Testis (tissue), 5 donors: ENCODE measurements at regions of chr20 and their contacts with region 1.

Region 1: GRCh38 chr20:58236612-58237330 is 8.3 kb upstream of the ANKRD60 start:
- DNase-seq: peak; percentile 81
- H3K4me3 ChIP-seq: peak overlapping the region; percentile 16 to 36
- H3K27ac ChIP-seq: no peak overlapping the region
- H3K4me1 ChIP-seq: no peaks in the 10 kb centered on the region
- H3K27me3 ChIP-seq: no peaks in the 10 kb centered on the region
- CTCF ChIP-seq: peak; percentile 85 to 94 (median 89)
- POLR2A ChIP-seq: no peak

Region 2: GRCh38 chr20:58829531-58829941 is 592.8 kb after region 1 on chr20:
- intact Hi-C with region 1: loop called (anchors 10 kb)
- DNase-seq: no peak
- H3K4me3 ChIP-seq: no peak overlapping the region
- H3K27ac ChIP-seq: no peak overlapping the region
- H3K4me1 ChIP-seq: no peaks in the 10 kb centered on the region
- H3K27me3 ChIP-seq: no peaks in the 10 kb centered on the region
- CTCF ChIP-seq: no peak
- POLR2A ChIP-seq: no peak